WTC11 (cell line): ENCODE measurements at regions of chr15 and their contacts with region 1.

Region 1: GRCh38 chr15:55221090-55222011 is 24.6 kb upstream of the RSL24D1 start:
- DNase-seq: no peak
- ATAC-seq: no peak
- H3K4me3 Mint-ChIP-seq: no peak overlapping the region
- H3K27ac Mint-ChIP-seq: peak overlapping the region; percentile 34
- H3K4me1 Mint-ChIP-seq: peaks cover 17% of the 10 kb centered on the region
- H3K27me3 Mint-ChIP-seq: no peaks in the 10 kb centered on the region
- CTCF ChIP-seq: no peak

Region 2: DNA sequence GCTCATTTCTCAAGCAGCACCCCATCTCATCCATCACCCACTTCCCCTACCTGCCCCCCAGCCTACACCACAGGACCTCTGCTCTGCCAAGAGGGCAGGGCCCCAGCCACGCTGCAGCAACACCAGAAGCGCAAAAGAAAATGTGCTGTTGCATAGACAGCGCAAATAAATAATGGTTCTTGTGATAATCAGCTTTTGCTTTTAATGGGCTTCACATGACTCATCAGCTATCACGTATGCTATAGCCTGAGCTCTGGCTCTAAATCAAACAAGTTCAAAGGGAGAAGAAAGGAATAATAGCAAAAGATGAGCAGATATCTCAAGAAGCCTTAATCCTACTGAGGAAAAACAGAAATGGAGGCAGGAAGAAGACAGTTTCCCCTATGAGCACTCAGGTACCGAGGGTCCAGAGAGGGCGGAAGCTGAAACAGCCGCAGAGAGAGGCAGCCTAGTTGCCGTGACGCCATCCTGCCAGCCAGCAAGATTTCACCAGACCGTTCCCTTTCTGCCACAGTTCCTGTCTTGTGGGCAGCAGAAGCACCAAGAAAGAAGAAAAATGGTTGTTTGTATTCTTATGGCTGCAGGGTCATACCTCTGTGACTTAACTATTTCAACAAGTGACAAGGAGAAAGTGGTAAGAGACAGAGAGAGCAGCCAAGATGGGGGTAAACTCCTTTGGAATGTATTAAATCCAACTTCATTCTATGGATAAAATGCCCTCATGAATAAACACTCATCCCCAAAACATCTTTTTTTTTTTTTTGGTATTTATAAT is 46.2 kb after region 1 on chr15:
- CTCF ChIA-PET with region 1: no interaction called
- POLR2A ChIA-PET with region 1: no interaction called
- DNase-seq: no peak
- ATAC-seq: no peak
- H3K4me3 Mint-ChIP-seq: no peak overlapping the region
- H3K27ac Mint-ChIP-seq: no peak overlapping the region
- H3K4me1 Mint-ChIP-seq: no peaks in the 10 kb centered on the region; the same call in 1 of the 2 replicates
- H3K27me3 Mint-ChIP-seq: no peaks in the 10 kb centered on the region
- CTCF ChIP-seq: no peak

Region 3: GRCh38 chr15:55290528-55291057 is 69.2 kb after region 1 on chr15:
- CTCF ChIA-PET with region 1: interaction called, 13 read pairs
- POLR2A ChIA-PET with region 1: no interaction called
- DNase-seq: peak; percentile 87
- ATAC-seq: peak; percentile 87
- H3K4me3 Mint-ChIP-seq: peak overlapping the region; percentile 70
- H3K27ac Mint-ChIP-seq: peak overlapping the region; percentile 50; the same call in 1 of the 2 replicates
- H3K4me1 Mint-ChIP-seq: peaks cover 11% of the 10 kb centered on the region
- H3K27me3 Mint-ChIP-seq: peaks cover 11% of the 10 kb centered on the region; the same call in 1 of the 2 replicates
- CTCF ChIP-seq: peak; percentile 27; the same call in 1 of the 2 replicates